Adrenal gland (tissue), 19 donors: ENCODE measurements at regions of chr22 and their contacts with region 1.

Region 1: GRCh38 chr22:31977141-31977841 is 33.0 kb downstream of the YWHAH start:
- DNase-seq: peak; percentile 77 to 92 (median 82)
- H3K4me3 ChIP-seq: no peak overlapping the region
- H3K27ac ChIP-seq: no peak overlapping the region
- H3K4me1 ChIP-seq: no peaks in the 10 kb centered on the region
- H3K27me3 ChIP-seq: no peaks in the 10 kb centered on the region
- CTCF ChIP-seq: peak; percentile 55 to 81 (median 75)
- POLR2A ChIP-seq: no peak

Region 2: GRCh38 chr22:32080904-32081303 is 103.6 kb after region 1 on chr22:
- intact Hi-C with region 1: loop called in 1 of 2 experiments (anchors 2 kb)
- DNase-seq: peak; percentile 19 to 66 (median 45)
- H3K4me3 ChIP-seq: no peak overlapping the region
- H3K27ac ChIP-seq: no peak overlapping the region
- H3K4me1 ChIP-seq: peaks cover 0 to 8% of the 10 kb centered on the region in 2 donors
- H3K27me3 ChIP-seq: no peaks in the 10 kb centered on the region
- CTCF ChIP-seq: peak; percentile 50 to 79 (median 74)
- POLR2A ChIP-seq: no peak

Region 3: DNA sequence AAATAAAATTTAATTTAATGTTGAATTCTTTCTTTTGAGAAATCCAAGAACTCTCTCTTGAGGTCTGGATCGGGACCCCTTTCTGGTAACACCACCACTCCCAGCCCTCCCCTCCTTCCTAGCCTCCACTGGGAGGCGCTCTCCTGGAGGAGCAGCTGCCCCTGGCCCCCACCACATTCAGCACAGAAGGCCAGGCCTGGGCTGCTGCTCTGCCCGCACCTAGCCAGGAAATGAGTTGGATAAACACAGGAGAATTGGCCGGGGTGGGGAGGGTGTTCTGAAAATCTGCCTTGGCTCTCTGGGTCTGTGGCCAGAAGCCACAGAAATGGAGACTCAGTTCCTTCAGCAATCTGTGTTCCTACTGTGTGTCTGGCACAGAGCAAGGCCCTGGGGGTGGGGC is 150.6 kb after region 1 on chr22:
- intact Hi-C with region 1: no loop called
- DNase-seq: no peak
- H3K4me3 ChIP-seq: no peak overlapping the region
- H3K27ac ChIP-seq: no peak overlapping the region
- H3K4me1 ChIP-seq: no peaks in the 10 kb centered on the region
- H3K27me3 ChIP-seq: no peaks in the 10 kb centered on the region
- CTCF ChIP-seq: no peak
- POLR2A ChIP-seq: no peak

Region 4: DNA sequence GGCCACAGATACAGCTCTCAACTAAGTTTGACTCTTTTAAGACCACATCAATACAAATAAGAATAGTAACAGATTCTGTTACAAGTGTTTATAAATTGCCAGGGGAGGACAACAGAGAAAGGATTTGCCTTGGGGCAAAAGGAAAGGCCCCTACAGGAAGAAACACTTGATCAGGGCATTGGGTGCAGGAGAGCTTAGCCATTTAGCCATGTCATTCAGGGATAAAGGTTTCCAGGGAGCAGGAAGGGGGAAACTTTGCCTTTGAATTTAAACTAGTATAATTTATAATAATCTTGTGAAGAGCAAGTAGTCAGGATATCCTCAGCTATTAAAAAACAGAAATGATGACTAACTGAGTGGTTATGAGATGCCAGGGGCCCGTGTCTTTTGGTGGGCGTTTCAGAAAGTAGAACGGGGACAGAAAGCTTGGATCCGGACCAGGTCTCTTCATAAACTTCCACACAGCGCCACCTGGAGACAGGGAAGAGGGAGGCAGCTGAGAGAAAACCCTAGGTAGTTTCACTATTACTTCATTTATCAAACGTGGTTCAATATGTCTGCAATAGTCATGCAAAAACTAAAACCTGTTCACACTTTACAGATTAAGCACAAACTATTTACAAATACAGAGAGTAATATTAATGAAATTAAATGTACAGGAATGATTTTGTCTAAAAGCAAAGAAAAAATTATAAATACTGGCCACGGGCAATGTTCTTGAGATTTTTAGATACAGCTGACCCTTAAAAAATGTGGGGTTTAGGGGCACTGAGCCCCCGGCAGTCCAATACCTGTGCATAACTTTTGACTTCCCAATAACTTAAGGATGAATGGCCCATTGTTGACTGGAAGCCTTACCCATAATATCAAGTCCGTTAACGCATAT is 288.8 kb after region 1 on chr22:
- intact Hi-C with region 1: loop called (anchors 5 to 10 kb)
- DNase-seq: peak; percentile 60 to 82 (median 74)
- H3K4me3 ChIP-seq: no peak overlapping the region
- H3K27ac ChIP-seq: no peak overlapping the region
- H3K4me1 ChIP-seq: peaks cover 0 to 4% of the 10 kb centered on the region in 2 donors
- H3K27me3 ChIP-seq: peaks cover 6% of the 10 kb centered on the region
- CTCF ChIP-seq: peak; percentile 58 to 82 (median 72)
- POLR2A ChIP-seq: no peak